ENCODE measurements at regions of chr16 and their contacts with region 1.

Region 1: GRCh38 chr16:57535680-57536305 is 578 bp downstream of the CCDC102A start:
- DNase-seq: peak; percentile 95
- ATAC-seq: peak; percentile 76
- H3K4me3 ChIP-seq: peak overlapping the region in 4 of 5 experiments; percentile 56 to 73 (median 70)
- H3K4me3 Mint-ChIP-seq: peak overlapping the region; percentile 89
- H3K27ac ChIP-seq: peak overlapping the region; percentile 90 to 94
- H3K27ac Mint-ChIP-seq: peak overlapping the region; percentile 96
- H3K4me1 ChIP-seq: peaks cover 86 to 91% of the 10 kb centered on the region in 2 donors
- H3K4me1 Mint-ChIP-seq: peaks cover 79% of the 10 kb centered on the region
- H3K27me3 ChIP-seq: no peaks in the 10 kb centered on the region
- H3K27me3 Mint-ChIP-seq: no peaks in the 10 kb centered on the region
- CTCF ChIP-seq: peak; percentile 29

Region 2: DNA sequence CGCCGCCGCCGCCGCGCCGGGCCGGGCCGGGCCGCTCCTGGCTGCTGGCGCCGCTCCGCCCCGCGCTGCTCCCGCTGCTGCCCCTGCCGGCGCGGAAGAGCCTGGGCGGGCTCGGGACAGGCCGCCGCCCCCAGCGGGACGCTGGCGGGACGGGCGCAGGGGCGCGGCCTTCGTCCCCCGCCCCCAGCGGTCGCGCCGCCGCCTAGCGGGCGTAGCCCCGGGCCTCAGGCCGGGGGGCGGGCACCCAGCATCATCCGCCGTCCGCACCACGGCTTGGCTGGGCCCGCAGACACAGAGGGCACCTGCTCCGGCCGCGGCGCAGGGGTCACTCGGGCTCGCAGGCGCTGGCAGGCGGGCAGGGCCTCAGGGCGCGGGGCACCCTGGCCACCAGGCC is 1110.4 kb before region 1 on chr16 and contains the start of gene AMFR:
- CTCF ChIA-PET with region 1: no interaction called
- POLR2A ChIA-PET with region 1: no interaction called
- intact Hi-C with region 1: loop called (anchors 10 kb)
- DNase-seq: peak; percentile 90
- ATAC-seq: peak; percentile 88
- H3K4me3 ChIP-seq: peak within 1 kb of the TSS; percentile 69 to 78 (median 70)
- H3K4me3 Mint-ChIP-seq: peak within 1 kb of the TSS; percentile 98
- H3K27ac ChIP-seq: peak within 1 kb of the TSS; percentile 72 to 81
- H3K27ac Mint-ChIP-seq: peak within 1 kb of the TSS; percentile 97
- H3K4me1 ChIP-seq: peaks cover 32 to 36% of the 10 kb centered on the region in 2 donors
- H3K4me1 Mint-ChIP-seq: peaks cover 34% of the 10 kb centered on the region
- H3K27me3 ChIP-seq: no peaks in the 10 kb centered on the region
- H3K27me3 Mint-ChIP-seq: no peaks in the 10 kb centered on the region
- CTCF ChIP-seq: peak; percentile 62
- total RNA-seq, gene AMFR: 225 and 234 TPM in 2 replicates

Region 3: DNA sequence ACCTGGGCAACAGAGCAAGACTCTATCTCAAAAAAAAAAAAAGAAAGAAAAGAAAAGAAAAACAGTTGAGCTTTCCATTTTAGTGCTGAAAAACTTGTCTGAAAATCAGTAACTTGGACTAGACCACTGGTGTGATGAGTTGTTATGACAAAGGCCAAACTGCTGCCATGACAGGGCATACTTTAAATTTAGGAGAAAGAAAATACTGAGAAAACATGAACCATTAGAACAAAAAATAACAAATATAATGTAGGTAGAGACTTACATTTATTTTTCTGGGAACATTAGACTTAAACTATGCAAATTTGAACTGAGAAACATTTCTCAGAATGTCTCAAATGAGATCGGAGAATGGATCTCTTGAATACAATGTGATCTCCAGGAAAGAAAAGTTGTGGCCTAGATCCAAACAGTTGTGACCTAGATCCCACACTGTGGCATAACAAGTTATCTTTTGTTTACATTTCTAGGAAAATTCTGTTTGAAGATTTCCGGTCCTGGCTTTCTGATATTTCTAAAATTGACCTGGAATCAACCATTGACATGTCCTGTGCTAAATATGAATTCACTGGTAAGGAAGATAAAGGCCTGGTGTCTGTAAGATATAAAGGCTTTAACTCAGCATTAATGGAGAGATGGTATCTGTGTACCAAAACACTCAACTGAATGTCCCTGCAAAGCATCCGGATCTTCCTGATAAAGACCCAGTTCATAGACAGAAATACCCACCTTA is 1073.6 kb before region 1 on chr16:
- CTCF ChIA-PET with region 1: no interaction called
- POLR2A ChIA-PET with region 1: interaction called, 10 read pairs
- intact Hi-C with region 1: no loop called
- DNase-seq: no peak
- ATAC-seq: no peak
- H3K4me3 ChIP-seq: no peak overlapping the region
- H3K4me3 Mint-ChIP-seq: no peak overlapping the region
- H3K27ac ChIP-seq: no peak overlapping the region
- H3K27ac Mint-ChIP-seq: no peak overlapping the region
- H3K4me1 ChIP-seq: no peaks in the 10 kb centered on the region
- H3K4me1 Mint-ChIP-seq: no peaks in the 10 kb centered on the region
- H3K27me3 ChIP-seq: no peaks in the 10 kb centered on the region
- H3K27me3 Mint-ChIP-seq: no peaks in the 10 kb centered on the region
- CTCF ChIP-seq: no peak

Region 4: DNA sequence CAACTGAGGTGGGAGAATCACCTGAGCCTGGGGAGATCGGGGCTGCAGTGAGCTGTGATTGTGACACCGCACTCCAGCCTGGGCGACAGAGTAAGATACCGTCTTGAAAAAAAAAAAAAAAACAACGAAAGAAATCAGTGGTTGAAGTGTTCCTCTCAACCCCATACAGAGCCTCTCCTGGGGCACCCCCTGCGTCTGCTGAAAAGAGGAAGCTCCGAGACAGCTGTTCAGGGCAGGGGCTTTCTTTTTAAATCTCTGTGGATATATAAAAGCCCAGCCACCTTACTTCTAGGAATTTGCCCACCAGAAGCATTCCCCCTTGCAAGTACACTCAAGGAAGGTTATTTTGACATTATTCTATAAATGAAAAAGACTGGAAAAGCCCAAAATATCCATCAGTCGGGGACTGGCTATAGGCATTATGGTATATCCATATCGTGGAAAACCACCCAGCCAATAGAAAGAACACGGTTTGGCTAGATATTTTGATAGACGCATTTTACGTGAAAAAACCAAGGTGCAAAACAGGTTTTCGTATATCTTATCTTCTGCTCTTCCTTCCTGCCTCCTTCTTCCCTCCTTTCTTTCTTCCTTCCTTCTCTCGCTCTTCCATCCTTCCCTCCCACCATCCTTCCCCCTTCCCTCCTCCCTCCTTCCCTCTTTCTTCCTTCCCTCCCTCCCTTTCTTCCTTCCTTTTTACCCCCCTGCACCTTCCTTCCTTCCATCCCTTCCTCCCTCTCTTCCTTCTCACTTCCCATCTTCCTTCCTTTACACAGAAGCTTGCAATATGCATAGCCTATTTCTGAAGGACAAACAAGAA is 186.4 kb before region 1 on chr16:
- CTCF ChIA-PET with region 1: no interaction called
- POLR2A ChIA-PET with region 1: interaction called, 3 read pairs
- intact Hi-C with region 1: loop called (anchors 5 kb)
- DNase-seq: peak; percentile 90
- ATAC-seq: peak; percentile 98
- H3K4me3 ChIP-seq: peak overlapping the region in 2 of 5 experiments; percentile 2 to 39
- H3K4me3 Mint-ChIP-seq: peak overlapping the region; percentile 50
- H3K27ac ChIP-seq: no peak overlapping the region
- H3K27ac Mint-ChIP-seq: peak overlapping the region; percentile 47
- H3K4me1 ChIP-seq: peaks cover 16 to 17% of the 10 kb centered on the region in 2 donors
- H3K4me1 Mint-ChIP-seq: peaks cover 32% of the 10 kb centered on the region
- H3K27me3 ChIP-seq: peaks cover 0 to 13% (median 6%) of the 10 kb centered on the region in 4 experiments
- H3K27me3 Mint-ChIP-seq: peaks cover 14% of the 10 kb centered on the region
- CTCF ChIP-seq: no peak

Region 5: DNA sequence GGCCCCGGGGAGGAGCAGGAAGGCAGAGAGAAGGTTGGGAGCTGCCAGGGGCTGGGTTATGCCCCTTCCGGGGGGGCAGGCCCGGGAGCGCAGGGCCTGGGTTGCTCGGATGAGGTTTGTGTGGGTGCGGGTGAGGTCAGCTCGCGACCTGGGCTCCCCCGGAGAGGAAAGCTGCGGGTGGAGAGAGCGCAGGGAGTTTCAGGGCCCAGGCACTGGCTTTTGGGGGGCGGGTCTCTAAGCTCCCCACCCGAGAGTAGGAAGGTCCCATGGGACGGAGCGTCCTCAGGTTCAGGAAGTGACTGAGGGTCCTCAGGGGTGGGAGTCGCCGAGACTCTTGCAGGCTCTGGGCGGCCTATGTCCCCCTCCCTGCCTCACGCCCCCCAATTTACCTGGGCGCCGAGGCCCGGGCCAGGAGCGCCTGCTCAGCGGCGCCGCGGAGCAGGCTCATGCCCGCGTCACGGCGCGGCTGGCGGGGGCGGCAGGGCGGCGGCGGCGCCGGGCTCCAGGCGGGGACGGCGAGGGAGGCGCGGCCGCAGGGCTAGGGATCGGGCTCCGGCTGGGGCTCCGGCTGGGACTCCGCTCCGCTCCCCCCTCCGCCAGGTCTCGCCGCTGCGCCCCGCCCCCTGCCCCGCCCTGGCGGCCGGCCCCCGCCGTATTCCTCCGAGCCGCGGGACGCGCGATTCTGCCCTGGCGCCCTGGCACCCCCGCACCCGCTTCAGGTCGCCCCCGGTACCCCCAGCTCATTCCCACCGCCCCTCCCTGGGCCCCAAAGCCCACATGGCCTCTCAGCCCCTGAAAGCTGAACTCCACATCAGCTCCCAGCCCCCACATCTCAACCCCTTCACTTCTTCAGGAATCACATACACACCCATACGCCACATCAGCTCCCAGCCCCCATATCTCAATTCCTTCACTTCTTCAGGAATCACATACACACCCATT is 49.6 kb before region 1 on chr16 and contains the start of gene DOK4:
- CTCF ChIA-PET with region 1: interaction called, 4 read pairs
- POLR2A ChIA-PET with region 1: interaction called, 3 read pairs
- intact Hi-C with region 1: loop called (anchors 1 kb)
- DNase-seq: peak; percentile 77
- ATAC-seq: peak; percentile 93
- H3K4me3 ChIP-seq: peak within 1 kb of the TSS; percentile 22 to 68 (median 56)
- H3K4me3 Mint-ChIP-seq: peak within 1 kb of the TSS; percentile 85
- H3K27ac ChIP-seq: no peak within 1 kb of the TSS
- H3K27ac Mint-ChIP-seq: no peak within 1 kb of the TSS
- H3K4me1 ChIP-seq: peaks cover 11 to 15% of the 10 kb centered on the region in 2 donors
- H3K4me1 Mint-ChIP-seq: peaks cover 16% of the 10 kb centered on the region
- H3K27me3 ChIP-seq: peaks cover 0 to 12% (median 3%) of the 10 kb centered on the region in 4 experiments
- H3K27me3 Mint-ChIP-seq: peaks cover 6% of the 10 kb centered on the region
- CTCF ChIP-seq: no peak
- total RNA-seq, gene DOK4: 0.73 and 1.6 TPM in 2 replicates

Region 6: GRCh38 chr16:57519796-57520360 is 15.9 kb before region 1 on chr16:
- CTCF ChIA-PET with region 1: interaction called, 77 read pairs
- POLR2A ChIA-PET with region 1: interaction called, 5 read pairs
- intact Hi-C with region 1: loop called (anchors 1 kb)
- DNase-seq: peak; percentile 83
- ATAC-seq: peak; percentile 76
- H3K4me3 ChIP-seq: no peak overlapping the region
- H3K4me3 Mint-ChIP-seq: no peak overlapping the region
- H3K27ac ChIP-seq: no peak overlapping the region
- H3K27ac Mint-ChIP-seq: no peak overlapping the region
- H3K4me1 ChIP-seq: peaks cover 26 to 39% of the 10 kb centered on the region in 2 donors
- H3K4me1 Mint-ChIP-seq: peaks cover 38% of the 10 kb centered on the region
- H3K27me3 ChIP-seq: no peaks in the 10 kb centered on the region
- H3K27me3 Mint-ChIP-seq: no peaks in the 10 kb centered on the region
- CTCF ChIP-seq: peak; percentile 98

Region 7: DNA sequence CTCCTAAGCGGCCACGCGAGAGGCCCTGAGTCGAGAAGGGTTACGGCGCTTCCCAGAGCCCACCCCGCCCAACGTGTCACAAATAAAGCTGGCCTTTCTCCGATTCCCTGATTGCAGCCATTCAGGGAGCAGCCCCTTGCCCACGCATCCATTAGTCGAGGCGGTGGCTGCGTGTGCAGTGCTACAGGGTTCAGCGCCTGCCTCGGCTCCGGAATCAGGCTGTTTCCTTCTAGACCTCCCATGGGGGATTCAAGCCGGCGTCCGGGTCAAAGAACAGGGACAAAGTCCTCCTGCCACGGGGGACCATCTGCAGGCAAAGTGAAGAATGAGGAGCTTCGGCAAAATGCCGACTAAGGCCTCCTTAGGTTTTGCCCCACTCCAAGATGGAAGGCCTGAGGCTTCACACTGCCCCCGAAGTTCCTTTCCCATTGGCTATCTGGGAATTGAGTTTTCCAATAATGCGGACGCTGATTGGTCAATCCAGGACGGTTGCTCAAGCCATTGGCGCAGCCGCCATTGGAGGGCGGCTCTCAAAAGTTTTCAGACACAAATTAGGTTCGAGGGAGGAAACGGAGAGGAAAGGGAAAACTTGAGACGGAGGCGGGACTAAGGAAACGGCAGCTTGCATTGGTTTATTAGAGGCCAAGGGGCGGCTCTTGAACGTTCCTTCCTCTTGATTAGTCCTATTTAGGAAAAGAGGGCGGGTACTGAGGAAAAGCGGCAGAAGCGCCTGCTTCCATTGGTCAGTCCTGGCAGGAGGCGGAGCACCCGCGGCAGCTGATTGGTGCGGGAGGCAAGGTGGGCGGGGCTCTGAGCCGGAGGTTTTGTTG is 199.3 kb after region 1 on chr16:
- CTCF ChIA-PET with region 1: no interaction called
- POLR2A ChIA-PET with region 1: no interaction called
- intact Hi-C with region 1: loop called (anchors 2 kb)
- DNase-seq: peak; percentile 99
- ATAC-seq: peak; percentile 88
- H3K4me3 ChIP-seq: peak overlapping the region; percentile 65 to 98 (median 90)
- H3K4me3 Mint-ChIP-seq: peak overlapping the region; percentile 93
- H3K27ac ChIP-seq: peak overlapping the region; percentile 37 to 78
- H3K27ac Mint-ChIP-seq: peak overlapping the region; percentile 89
- H3K4me1 ChIP-seq: peaks cover 15 to 19% of the 10 kb centered on the region in 2 donors
- H3K4me1 Mint-ChIP-seq: peaks cover 34% of the 10 kb centered on the region
- H3K27me3 ChIP-seq: no peaks in the 10 kb centered on the region
- H3K27me3 Mint-ChIP-seq: no peaks in the 10 kb centered on the region
- CTCF ChIP-seq: no peak